CD4-positive, alpha-beta T cell (primary cell): ENCODE measurements at regions of chr11 and their contacts with region 1.

Region 1: DNA sequence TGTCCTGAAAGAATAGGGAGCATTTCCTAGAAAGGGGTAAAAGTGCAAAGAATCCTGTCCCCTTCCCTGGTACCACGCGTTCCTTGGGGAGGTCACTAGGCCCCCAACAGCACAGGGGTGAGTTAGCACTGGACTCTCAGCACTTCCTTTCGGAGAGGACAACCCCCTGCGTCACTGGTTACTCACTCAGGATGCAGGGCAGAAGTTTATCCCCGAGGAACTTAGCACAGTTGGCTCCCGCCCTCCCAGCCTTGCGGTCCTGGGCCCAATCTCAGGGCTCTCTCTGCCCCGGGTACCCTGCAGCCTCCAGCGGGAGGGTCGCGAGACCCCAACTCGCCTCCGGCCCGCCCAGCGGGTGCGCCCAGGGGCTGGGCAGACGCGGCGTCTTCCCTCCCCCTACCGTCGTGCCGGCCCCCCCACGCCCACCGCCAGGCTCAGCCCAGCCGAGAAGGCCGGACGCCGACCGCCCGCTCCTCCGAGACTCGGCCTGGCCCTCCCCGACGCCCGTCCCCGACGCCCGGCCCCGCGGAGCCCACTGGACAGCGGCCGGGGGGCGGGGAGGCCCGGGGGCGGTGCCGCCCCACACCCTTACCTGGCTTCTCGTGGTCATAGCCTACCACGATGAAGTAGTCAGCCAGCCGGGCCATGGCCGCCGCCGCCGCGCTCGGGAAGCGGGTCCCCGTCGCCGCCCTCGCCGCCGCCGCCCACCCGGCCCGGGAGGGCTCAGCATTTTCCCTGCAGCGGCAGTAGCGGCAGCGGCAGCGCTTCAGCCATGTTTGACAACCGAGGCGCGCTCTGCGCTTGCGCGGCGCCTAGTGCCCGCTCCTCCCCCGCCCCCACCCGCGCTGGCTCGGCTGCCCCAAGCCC is at the start of gene SBF2:
- DNase-seq: peak; percentile 60 to 91 (median 76)
- ATAC-seq: peak; percentile 70
- H3K4me3 ChIP-seq: peak within 1 kb of the TSS; percentile 65
- H3K4me3 Mint-ChIP-seq: peak within 1 kb of the TSS; percentile 89
- H3K27ac ChIP-seq: no peak within 1 kb of the TSS
- H3K27ac Mint-ChIP-seq: peak within 1 kb of the TSS; percentile 67
- H3K4me1 ChIP-seq: peaks cover 34% of the 10 kb centered on the region
- H3K4me1 Mint-ChIP-seq: peaks cover 37% of the 10 kb centered on the region
- H3K27me3 ChIP-seq: peaks cover 5 to 23% of the 10 kb centered on the region in 2 experiments
- H3K27me3 Mint-ChIP-seq: peaks cover 33% of the 10 kb centered on the region
- CTCF ChIP-seq: no peak
- total RNA-seq, gene SBF2: 14.2 to 15.2 TPM

Region 2: GRCh38 chr11:10742471-10743208 is 449.0 kb after region 1 on chr11:
- CTCF ChIA-PET with region 1: no interaction called
- POLR2A ChIA-PET with region 1: no interaction called
- intact Hi-C with region 1: loop called in 1 of 2 experiments (anchors 5 kb)
- DNase-seq: peak in 6 of 14 experiments; percentile 16 to 77 (median 54)
- ATAC-seq: peak; percentile 89
- H3K4me3 ChIP-seq: no peak overlapping the region
- H3K4me3 Mint-ChIP-seq: peak overlapping the region; percentile 85
- H3K27ac ChIP-seq: no peak overlapping the region
- H3K27ac Mint-ChIP-seq: peak overlapping the region; percentile 91
- H3K4me1 ChIP-seq: peaks cover 27% of the 10 kb centered on the region
- H3K4me1 Mint-ChIP-seq: peaks cover 25% of the 10 kb centered on the region
- H3K27me3 ChIP-seq: no peaks in the 10 kb centered on the region
- H3K27me3 Mint-ChIP-seq: no peaks in the 10 kb centered on the region
- CTCF ChIP-seq: no peak

Region 3: DNA sequence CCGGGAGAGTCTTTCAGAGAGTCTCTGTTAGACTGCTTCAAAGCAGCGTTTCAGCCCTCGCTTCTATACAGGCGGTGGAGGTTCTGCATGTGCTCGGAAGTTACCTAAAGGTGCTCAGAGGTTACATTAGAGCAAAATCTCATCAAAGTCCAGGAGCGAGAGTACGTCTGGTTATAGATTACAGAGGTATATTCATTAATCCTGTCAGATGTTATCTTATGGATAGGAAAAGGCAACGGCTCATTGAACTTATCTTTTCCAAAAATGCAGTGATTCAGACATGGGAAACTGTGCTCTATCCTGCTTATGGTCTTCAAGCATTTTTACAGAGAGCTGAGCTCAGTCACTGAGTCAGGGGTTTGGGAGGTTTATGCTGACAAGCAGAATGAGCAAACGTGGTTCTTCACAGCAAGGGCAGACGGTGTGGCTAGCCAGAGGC is 573.3 kb after region 1 on chr11:
- CTCF ChIA-PET with region 1: no interaction called
- POLR2A ChIA-PET with region 1: no interaction called
- intact Hi-C with region 1: loop called in 1 of 2 experiments (anchors 10 kb)
- DNase-seq: no peak
- ATAC-seq: no peak
- H3K4me3 ChIP-seq: no peak overlapping the region
- H3K4me3 Mint-ChIP-seq: no peak overlapping the region
- H3K27ac ChIP-seq: no peak overlapping the region
- H3K27ac Mint-ChIP-seq: no peak overlapping the region
- H3K4me1 ChIP-seq: no peaks in the 10 kb centered on the region
- H3K4me1 Mint-ChIP-seq: peaks cover 19% of the 10 kb centered on the region
- H3K27me3 ChIP-seq: no peaks in the 10 kb centered on the region
- H3K27me3 Mint-ChIP-seq: no peaks in the 10 kb centered on the region
- CTCF ChIP-seq: no peak